Adrenal gland (tissue), 19 donors: ENCODE measurements at regions of chr9 and their contacts with region 1.

Region 1: DNA sequence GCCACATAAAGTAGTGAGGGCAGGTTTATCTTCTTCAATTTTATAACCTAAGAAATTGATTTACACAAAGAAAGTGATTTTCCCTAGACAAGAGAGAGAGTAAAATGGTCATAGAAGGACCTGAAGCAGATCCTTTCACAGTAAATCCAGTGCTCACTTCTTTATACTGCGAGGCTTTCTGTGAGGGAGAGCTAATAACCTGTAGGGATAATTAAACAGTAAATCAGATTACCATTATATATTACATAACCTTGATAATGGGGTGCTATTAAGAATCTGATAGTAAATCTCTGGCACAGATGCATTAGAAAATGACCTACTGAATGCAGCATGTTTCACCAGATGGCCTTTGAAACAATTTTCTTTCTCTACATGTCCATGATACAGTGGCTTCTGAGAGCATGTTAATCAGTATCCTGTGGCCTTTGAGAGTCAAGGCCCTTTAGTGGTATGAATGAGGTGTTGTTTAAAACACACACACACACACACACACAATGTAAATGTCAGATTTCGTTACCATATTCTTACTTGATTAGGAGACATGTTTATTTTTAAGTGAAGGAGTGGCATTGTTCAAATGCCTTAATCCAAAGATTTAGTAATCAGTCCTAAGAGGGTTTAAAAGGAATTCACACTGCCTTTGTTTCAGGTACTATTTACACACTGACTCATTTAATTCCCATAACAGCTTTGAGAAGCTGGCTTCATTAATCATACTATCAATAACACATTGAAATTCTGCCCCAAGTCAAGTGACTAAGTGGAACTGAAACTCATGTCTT is 124.7 kb downstream of the ALDH1A1 start:
- DNase-seq: no peak
- H3K4me3 ChIP-seq: no peak overlapping the region
- H3K27ac ChIP-seq: no peak overlapping the region
- H3K4me1 ChIP-seq: no peaks in the 10 kb centered on the region
- H3K27me3 ChIP-seq: no peaks in the 10 kb centered on the region
- CTCF ChIP-seq: no peak
- POLR2A ChIP-seq: no peak

Region 2: GRCh38 chr9:72038890-72039410 is 789.2 kb before region 1 on chr9:
- intact Hi-C with region 1: loop called (anchors 5 to 10 kb)
- DNase-seq: peak; percentile 65 to 92 (median 80)
- H3K4me3 ChIP-seq: no peak overlapping the region
- H3K27ac ChIP-seq: no peak overlapping the region
- H3K4me1 ChIP-seq: no peaks in the 10 kb centered on the region
- H3K27me3 ChIP-seq: no peaks in the 10 kb centered on the region
- CTCF ChIP-seq: peak in 5 of 6 experiments; percentile 91 to 96 (median 94)
- POLR2A ChIP-seq: no peak

Region 3: DNA sequence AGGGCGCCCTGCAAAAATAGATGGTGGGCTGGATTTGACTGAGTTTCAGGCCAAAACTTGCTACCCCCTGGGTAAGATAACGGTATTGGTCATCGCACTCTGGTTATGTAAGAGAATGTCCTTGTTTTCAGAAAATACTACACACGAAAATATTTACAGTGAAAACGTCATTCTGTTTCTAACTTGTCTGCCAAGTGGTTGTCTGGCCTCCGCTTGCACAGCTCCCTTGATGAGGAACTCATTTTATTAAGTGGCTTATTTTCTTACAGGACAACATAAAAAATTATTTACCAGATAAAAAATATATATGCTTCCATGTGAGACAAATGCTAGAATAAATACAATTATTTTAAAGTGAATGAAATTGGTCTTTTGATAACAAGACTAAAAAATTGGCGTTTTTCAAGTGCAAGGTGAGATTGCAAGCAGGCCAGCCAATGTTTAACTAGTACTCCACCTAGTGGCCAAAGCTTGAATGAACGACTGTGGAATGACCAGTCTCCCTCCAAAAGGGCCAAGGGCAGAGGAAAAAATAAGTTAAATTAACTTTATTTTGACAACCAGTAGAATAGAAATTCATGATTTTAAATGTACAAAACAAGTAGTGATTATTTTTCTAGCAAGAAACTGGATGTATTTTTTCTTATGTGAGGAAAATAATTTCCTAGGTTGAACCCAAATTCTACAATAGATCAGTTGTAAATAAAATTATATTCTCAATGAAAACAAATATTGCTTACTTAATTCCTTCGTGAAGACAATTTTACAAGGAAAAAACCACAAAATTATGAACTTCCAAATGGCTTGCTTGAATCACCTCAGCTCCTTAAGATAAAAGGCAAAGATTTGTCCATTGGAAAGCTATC is 556.3 kb before region 1 on chr9:
- intact Hi-C with region 1: loop called in 1 of 2 experiments (anchors 10 kb)
- DNase-seq: peak; percentile 36 to 74 (median 68)
- H3K4me3 ChIP-seq: no peak overlapping the region
- H3K27ac ChIP-seq: no peak overlapping the region
- H3K4me1 ChIP-seq: no peaks in the 10 kb centered on the region
- H3K27me3 ChIP-seq: no peaks in the 10 kb centered on the region
- CTCF ChIP-seq: peak; percentile 71 to 93 (median 82)
- POLR2A ChIP-seq: no peak

Region 4: DNA sequence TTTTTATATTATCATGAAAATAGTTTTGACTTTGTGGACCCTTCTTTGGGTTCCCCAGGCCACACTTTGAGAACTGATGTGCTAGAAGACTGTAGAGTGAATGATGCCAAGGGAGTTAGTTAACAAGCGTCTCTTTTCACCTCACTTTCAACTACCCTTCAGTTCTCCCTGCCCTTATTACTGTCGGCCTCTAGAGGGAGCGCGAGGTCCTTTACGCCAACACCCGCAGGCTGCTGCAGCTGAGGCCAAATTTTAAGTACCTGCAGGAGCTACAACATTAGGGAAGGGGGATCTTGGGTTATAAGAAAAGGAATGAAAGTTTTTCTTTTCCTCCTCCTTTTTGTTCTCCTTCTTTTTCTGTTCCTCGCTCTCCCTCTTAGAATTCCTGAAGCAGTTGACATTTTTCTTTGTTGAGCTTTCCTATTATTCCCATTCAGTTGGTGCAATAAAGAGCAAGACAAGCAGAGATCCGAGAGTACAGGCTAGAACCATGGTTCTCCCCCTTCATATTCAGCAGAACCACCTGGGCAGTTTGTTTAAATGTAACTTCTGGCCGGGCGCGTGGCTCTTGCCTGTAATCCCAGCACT is 547.1 kb before region 1 on chr9:
- intact Hi-C with region 1: loop called (anchors 5 to 10 kb)
- DNase-seq: peak; percentile 60 to 84 (median 75)
- H3K4me3 ChIP-seq: no peak overlapping the region
- H3K27ac ChIP-seq: no peak overlapping the region
- H3K4me1 ChIP-seq: no peaks in the 10 kb centered on the region
- H3K27me3 ChIP-seq: no peaks in the 10 kb centered on the region
- CTCF ChIP-seq: peak; percentile 82 to 93 (median 88)
- POLR2A ChIP-seq: no peak

Region 5: DNA sequence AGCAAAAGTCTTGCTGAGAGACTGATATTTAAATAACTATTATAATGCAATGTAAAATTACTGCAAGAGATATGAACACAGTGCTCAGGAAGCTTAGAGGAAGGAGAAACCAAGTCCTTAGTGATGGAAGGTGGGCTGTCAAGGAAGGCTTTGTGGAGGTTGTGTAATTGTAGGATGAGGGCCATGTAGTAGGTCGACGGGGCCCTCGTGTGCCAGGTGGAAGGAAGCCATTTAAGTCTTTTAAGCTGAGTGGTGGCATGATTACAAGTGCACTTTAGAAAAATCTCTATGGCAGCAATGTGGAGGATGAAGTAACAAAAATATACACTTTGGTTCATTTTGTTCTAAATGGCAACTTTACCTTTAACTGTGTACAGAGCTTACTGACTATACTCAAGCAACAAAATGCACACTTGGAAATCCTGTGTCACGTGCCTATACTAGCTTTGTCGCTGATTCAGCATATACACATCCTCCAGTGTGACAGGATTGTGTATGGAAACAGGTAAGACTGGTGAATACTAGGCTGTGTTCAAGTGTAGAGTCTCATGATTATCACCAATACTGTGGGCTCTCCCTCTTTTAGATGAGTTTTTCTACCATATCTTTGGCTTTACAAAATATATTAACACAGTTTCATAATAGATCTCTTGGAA is 228.1 kb before region 1 on chr9:
- intact Hi-C with region 1: loop called in 1 of 2 experiments (anchors 10 kb)
- DNase-seq: no peak
- H3K4me3 ChIP-seq: no peak overlapping the region
- H3K27ac ChIP-seq: no peak overlapping the region
- H3K4me1 ChIP-seq: no peaks in the 10 kb centered on the region
- H3K27me3 ChIP-seq: no peaks in the 10 kb centered on the region
- CTCF ChIP-seq: no peak
- POLR2A ChIP-seq: no peak

Region 6: DNA sequence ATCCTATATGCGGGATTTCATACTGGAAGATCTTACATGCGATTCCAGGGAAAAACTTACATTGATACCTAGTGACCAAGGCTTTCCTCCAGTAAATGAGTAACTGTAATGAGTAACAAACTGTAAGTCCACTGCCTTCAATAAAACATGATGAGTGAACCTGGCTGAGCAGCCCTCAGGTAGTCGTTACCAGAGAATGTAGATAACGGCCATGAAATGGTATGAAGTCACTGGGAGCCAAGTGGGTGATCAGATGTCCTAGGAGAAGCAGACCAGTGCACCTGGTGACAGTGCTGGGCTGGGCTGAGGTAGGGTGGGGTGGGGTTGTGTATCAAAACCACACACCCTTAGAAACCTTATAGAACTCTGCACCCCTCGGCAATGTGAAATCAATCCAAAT is 78.9 kb before region 1 on chr9:
- intact Hi-C with region 1: no loop called
- DNase-seq: no peak
- H3K4me3 ChIP-seq: no peak overlapping the region
- H3K27ac ChIP-seq: no peak overlapping the region
- H3K4me1 ChIP-seq: no peaks in the 10 kb centered on the region
- H3K27me3 ChIP-seq: no peaks in the 10 kb centered on the region
- CTCF ChIP-seq: no peak
- POLR2A ChIP-seq: no peak

Region 7: GRCh38 chr9:72772661-72773060 is 55.5 kb before region 1 on chr9:
- intact Hi-C with region 1: no loop called
- DNase-seq: no peak
- H3K4me3 ChIP-seq: no peak overlapping the region
- H3K27ac ChIP-seq: no peak overlapping the region
- H3K4me1 ChIP-seq: no peaks in the 10 kb centered on the region
- H3K27me3 ChIP-seq: no peaks in the 10 kb centered on the region
- CTCF ChIP-seq: no peak
- POLR2A ChIP-seq: no peak

Region 8: DNA sequence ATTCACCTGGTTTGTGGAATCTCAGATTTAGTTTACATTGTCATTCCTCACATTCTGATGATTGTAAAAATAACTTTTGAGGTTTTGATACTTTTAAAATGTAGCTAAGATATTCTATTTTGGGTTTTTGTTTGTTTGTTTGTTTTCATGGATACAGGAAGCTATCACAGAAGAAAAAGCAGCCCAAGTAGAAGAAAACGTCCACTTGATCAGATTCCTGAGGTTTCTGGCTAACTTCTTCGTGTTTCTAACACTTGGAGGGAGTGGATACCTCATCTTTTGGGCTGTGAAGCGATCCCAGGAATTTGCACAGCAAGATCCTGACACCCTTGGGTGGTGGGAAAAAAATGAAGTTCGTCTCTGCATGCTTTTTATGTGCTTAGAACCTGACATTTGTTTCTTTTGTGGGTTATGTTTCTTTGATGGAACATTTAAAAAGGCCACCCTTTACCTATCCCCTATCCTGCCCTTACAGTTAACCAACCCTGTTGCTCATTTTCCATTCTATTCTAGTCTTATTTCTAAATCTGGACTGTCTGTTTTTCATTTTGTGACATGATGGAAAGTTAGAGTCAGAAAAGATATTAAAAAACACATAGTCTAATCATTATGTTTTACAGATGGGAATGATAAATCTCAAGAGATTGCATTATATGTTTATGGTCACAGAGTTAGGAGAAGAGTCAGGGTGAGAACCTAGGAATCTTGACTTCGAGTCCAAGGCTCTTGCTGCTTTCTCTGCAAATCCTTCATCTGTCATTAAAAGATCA is 39.0 kb before region 1 on chr9:
- intact Hi-C with region 1: no loop called
- DNase-seq: no peak
- H3K4me3 ChIP-seq: no peak overlapping the region
- H3K27ac ChIP-seq: no peak overlapping the region
- H3K4me1 ChIP-seq: no peaks in the 10 kb centered on the region
- H3K27me3 ChIP-seq: no peaks in the 10 kb centered on the region
- CTCF ChIP-seq: no peak
- POLR2A ChIP-seq: no peak

Region 9: DNA sequence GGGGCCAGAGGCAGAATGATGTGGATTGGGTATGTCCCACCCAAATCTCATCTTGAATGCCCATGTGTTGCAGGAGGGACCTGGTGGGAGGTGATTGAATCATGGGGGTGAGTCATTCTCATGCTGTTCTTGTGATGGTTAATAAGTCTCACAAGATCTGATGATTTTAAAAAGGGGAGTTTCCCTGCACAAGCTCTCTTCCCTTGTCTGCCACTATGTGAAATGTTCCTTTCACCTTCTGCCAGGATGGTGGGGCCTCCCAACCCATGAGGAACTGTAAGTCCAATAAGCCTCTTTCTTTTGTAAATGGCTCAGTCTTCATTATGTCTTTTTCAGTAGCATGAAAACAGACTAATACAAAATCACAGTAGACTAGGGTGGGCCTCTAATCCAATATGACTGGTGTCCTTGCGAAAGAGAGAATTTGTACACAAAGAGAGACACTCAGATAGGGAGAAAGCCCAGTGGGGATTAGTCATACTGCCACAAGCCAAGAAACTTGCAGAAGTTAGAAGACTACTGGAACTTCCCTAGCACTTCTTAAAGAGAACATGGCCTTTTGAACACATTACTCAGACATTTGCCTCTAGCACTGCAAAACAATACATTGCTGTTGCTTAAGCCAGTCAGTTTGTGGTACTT is 392.0 kb after region 1 on chr9:
- intact Hi-C with region 1: no loop called
- DNase-seq: peak in 2 of 7 donors; percentile 4 to 16
- H3K4me3 ChIP-seq: no peak overlapping the region
- H3K27ac ChIP-seq: no peak overlapping the region
- H3K4me1 ChIP-seq: no peaks in the 10 kb centered on the region
- H3K27me3 ChIP-seq: no peaks in the 10 kb centered on the region
- CTCF ChIP-seq: no peak
- POLR2A ChIP-seq: no peak